ENCODE measurements at regions of chr7 and their contacts with region 1.

Region 1: GRCh38 chr7:7989133-7989984 is 20.8 kb downstream of the GLCCI1 start:
- DNase-seq: peak in 1 of 5 donors; percentile 15
- H3K4me3 ChIP-seq: peak overlapping the region in 1 of 2 donors; percentile 20
- H3K4me3 Mint-ChIP-seq: peak overlapping the region; percentile 64 to 88 (median 83)
- H3K27ac ChIP-seq: peak overlapping the region; percentile 41
- H3K27ac Mint-ChIP-seq: peak overlapping the region; percentile 20 to 89 (median 78)
- H3K4me1 ChIP-seq: peaks cover 55% of the 10 kb centered on the region
- H3K4me1 Mint-ChIP-seq: peaks cover 43 to 72% (median 60%) of the 10 kb centered on the region in 4 donors
- H3K27me3 ChIP-seq: no peaks in the 10 kb centered on the region
- H3K27me3 Mint-ChIP-seq: no peaks in the 10 kb centered on the region

Region 2: GRCh38 chr7:7944619-7945282 is 44.6 kb before region 1 on chr7:
- CTCF ChIA-PET with region 1: no interaction called
- POLR2A ChIA-PET with region 1: no interaction called
- intact Hi-C with region 1: no loop called
- DNase-seq: peak; percentile 64 to 77 (median 75)
- H3K4me3 ChIP-seq: peak overlapping the region; percentile 26 to 29
- H3K4me3 Mint-ChIP-seq: peak overlapping the region; percentile 70 to 89 (median 82)
- H3K27ac ChIP-seq: peak overlapping the region; percentile 59
- H3K27ac Mint-ChIP-seq: peak overlapping the region; percentile 78 to 97 (median 90)
- H3K4me1 ChIP-seq: peaks cover 42% of the 10 kb centered on the region
- H3K4me1 Mint-ChIP-seq: peaks cover 21 to 51% (median 28%) of the 10 kb centered on the region in 4 donors
- H3K27me3 ChIP-seq: no peaks in the 10 kb centered on the region
- H3K27me3 Mint-ChIP-seq: no peaks in the 10 kb centered on the region

Region 3: GRCh38 chr7:8003077-8003476 is 13.7 kb after region 1 on chr7:
- CTCF ChIA-PET with region 1: no interaction called
- POLR2A ChIA-PET with region 1: interaction called, 3 read pairs
- intact Hi-C with region 1: loop called (anchors 2 kb)
- DNase-seq: no peak
- H3K4me3 ChIP-seq: no peak overlapping the region
- H3K4me3 Mint-ChIP-seq: peak overlapping the region in 1 of 8 donors; percentile 11
- H3K27ac ChIP-seq: no peak overlapping the region
- H3K27ac Mint-ChIP-seq: peak overlapping the region in 5 of 7 donors; percentile 9 to 67 (median 32)
- H3K4me1 ChIP-seq: no peaks in the 10 kb centered on the region
- H3K4me1 Mint-ChIP-seq: peaks cover 7 to 21% (median 17%) of the 10 kb centered on the region in 4 donors
- H3K27me3 ChIP-seq: no peaks in the 10 kb centered on the region
- H3K27me3 Mint-ChIP-seq: no peaks in the 10 kb centered on the region

Measured in CD4-positive, alpha-beta memory T cell (primary cell).